Esophagus muscularis mucosa (tissue), 4 donors: ENCODE measurements at regions of chr17 and their contacts with region 1.

Region 1: DNA sequence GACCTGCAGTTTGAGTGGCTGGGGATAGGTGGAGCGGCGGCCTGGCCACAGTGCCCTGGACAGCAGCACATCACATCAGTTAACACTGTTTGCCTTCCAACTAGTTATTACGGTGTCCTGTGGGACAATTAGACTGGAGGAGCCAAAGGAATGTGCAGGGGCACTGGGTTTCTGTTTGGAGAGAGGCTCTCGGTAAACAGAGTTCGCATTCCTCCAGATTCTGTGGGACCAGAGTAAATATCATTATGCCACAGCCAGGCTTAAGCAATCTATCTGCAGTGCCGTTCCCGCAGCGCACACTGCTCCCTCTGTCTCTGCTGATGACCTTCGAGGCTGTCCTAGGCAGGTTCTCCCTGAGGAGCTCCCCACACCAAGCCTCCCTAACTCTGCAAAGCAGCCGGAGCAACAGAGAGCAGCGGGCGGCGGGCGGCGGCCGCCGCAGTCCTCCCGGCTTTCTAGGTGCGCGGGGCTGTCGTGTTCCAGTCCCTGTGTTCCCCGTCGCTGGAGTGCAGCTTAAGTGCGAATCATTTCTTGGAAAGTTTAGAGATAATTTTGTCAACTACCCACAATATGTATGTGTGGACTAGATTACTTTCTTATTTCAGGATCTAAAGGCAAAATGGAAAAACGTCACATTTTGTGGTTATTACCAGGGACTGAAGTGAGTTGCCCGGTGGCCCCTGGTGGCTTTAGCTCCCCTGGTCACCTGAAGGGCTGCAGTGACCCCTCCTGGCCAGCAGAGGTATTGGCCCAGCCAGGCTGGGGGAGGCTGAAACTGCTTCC is 43.2 kb downstream of the PGS1 start:
- DNase-seq: no peak
- H3K4me3 ChIP-seq: no peak overlapping the region
- H3K27ac ChIP-seq: peak overlapping the region in 1 of 4 donors; percentile 17
- H3K4me1 ChIP-seq: peaks cover 19 to 53% (median 35%) of the 10 kb centered on the region in 4 donors
- H3K27me3 ChIP-seq: no peaks in the 10 kb centered on the region
- CTCF ChIP-seq: peak in 2 of 3 experiments; percentile 98
- EP300 ChIP-seq: no peak
- POLR2A ChIP-seq: no peak

Region 2: DNA sequence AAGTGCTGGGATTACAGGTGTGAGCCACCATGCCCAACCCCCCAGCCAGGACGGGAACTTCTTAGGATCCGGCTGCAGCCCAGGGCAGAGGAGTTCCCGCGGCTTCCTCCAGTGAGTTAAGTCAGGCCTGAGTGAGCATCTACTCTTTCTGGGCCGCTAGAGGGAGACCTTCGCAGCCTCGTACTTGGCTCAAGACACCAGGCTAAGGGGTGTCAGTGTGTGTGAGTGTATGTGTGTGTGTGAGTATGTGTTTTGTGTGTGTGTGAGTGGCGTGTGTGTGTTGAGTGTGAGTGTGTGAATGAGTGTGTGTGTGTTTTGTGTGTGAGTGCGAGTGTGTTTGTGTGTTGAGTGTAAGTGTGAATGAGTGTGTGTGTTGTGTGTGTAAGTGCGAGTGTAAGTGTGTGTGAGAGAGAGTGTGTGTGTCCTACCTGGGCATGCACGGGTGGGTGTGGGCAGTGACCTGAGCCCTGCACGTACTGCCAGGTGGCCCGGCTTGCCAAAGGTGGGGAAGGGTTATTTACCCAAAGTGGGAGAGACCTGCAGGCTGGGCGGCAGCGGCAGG is 131.8 kb before region 1 on chr17:
- intact Hi-C with region 1: loop called (anchors 2 kb)
- DNase-seq: peak; percentile 95
- H3K4me3 ChIP-seq: no peak overlapping the region
- H3K27ac ChIP-seq: no peak overlapping the region
- H3K4me1 ChIP-seq: peaks cover 6 to 15% (median 9%) of the 10 kb centered on the region in 4 donors
- H3K27me3 ChIP-seq: no peaks in the 10 kb centered on the region
- CTCF ChIP-seq: peak; percentile 69 to 84 (median 74)
- EP300 ChIP-seq: no peak
- POLR2A ChIP-seq: no peak